AG04450 (cell line): ENCODE measurements at regions of chr2 and their contacts with region 1.

Region 1: GRCh38 chr2:70142590-70143313 is 48.1 kb downstream of the C2orf42 start:
- DNase-seq: peak; percentile 99
- H3K4me3 ChIP-seq: peak overlapping the region; percentile 59
- H3K27ac ChIP-seq: peak overlapping the region; percentile 82
- H3K27me3 ChIP-seq: no peaks in the 10 kb centered on the region
- CTCF ChIP-seq: peak; percentile 88

Region 2: DNA sequence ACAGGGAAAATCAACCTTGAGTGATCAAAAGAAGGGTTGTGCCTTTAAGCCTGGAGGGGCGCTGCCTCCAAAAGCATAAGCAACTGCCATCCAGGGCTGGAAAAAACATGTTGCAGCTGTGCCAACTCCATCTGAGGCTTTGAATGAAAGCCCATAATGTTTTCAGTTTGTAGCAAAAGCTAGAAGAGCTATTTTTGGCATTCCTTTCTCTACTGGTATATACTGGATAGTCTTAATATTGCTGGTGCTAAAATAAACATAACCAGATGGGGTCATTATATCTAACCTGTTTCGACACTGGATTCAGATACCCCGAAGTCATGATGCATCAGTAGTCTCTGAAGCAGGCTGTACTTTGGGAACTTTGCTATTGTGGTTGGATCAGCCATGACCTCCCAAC is 375.7 kb before region 1 on chr2:
- CTCF ChIA-PET with region 1: no interaction called
- POLR2A ChIA-PET with region 1: no interaction called
- DNase-seq: peak; percentile 79
- H3K4me3 ChIP-seq: no peak overlapping the region; the same call in 1 of the 2 replicates
- H3K27ac ChIP-seq: peak overlapping the region; percentile 93
- H3K27me3 ChIP-seq: no peaks in the 10 kb centered on the region
- CTCF ChIP-seq: peak; percentile 46

Region 3: DNA sequence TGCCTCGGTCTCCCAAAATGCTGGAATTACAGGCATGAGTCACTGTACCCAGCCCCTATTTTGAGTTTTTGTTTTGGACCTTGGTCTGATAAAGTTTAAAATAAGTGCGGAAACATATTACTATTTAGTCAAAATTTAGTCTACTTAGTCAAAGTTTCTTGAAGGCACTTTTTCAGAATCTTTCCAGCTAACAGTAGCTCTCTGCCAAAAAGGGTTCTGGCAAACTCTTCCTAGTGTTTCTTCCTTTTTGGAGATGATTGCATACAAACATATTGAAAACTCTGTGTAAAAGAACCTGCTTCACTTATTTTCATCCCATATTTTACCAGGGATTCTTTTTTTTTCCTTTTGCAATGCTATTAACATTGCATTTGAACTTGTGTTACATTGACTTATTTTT is 284.5 kb before region 1 on chr2:
- CTCF ChIA-PET with region 1: interaction called, 10 read pairs
- POLR2A ChIA-PET with region 1: no interaction called
- DNase-seq: no peak
- H3K4me3 ChIP-seq: no peak overlapping the region
- H3K27ac ChIP-seq: no peak overlapping the region
- H3K27me3 ChIP-seq: no peaks in the 10 kb centered on the region
- CTCF ChIP-seq: no peak

Region 4: GRCh38 chr2:70070541-70071268 is 72.0 kb before region 1 on chr2:
- CTCF ChIA-PET with region 1: interaction called, 11 read pairs
- POLR2A ChIA-PET with region 1: interaction called, 5 read pairs
- DNase-seq: peak; percentile 77
- H3K4me3 ChIP-seq: no peak overlapping the region
- H3K27ac ChIP-seq: peak overlapping the region; percentile 42
- H3K27me3 ChIP-seq: no peaks in the 10 kb centered on the region
- CTCF ChIP-seq: peak; percentile 97

Region 5: DNA sequence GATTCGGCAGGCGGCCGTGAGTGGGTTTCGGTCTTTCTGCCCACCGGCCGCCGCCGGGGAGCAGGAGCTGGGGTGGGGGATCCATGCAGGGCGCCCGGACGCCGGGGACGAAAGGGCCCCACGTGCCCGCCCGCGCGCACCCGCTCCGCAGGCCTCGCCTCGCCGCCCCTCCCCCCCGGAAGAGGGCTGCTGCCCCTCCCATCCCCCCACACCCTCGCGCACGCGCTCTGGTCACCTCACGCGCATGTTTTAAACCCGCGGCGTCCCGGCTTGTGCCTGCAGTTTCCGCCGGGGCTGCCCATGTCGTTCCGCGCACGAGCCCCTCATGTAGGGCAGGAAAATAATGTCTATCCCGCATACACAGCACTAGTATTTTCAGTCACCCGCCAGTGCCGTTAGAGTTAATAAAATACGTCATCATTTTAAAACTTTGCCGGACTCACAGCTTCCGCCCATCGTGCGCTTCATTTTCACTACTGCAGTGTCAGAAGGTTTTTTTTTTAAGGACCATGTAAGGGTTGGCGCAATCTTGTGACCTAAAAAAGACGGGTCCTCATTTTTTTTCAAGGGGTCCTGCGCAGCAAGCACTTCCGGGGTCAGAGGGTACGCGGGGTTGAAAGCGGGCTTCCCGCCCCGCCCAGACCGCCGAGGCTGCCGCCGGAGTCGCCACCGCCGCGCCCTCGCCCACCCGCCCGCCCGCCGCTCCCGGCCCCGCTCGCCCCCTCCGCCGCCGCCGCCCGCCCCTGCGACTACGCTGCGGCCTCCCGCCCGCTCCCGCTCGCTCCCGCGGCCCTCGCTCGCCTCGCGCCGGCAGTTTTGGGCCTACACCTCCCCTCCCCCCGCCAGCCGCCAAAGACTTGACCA is 55.7 kb before region 1 on chr2 and contains the start of gene PCBP1:
- CTCF ChIA-PET with region 1: interaction called, 6 read pairs
- POLR2A ChIA-PET with region 1: interaction called, 23 read pairs
- DNase-seq: peak; percentile 85
- H3K4me3 ChIP-seq: peak within 1 kb of the TSS; percentile 97
- H3K27ac ChIP-seq: peak within 1 kb of the TSS; percentile 100
- H3K27me3 ChIP-seq: no peaks in the 10 kb centered on the region
- CTCF ChIP-seq: no peak
- polyA plus RNA-seq, gene PCBP1: 63.8 and 91.3 TPM in 2 replicates

Region 6: DNA sequence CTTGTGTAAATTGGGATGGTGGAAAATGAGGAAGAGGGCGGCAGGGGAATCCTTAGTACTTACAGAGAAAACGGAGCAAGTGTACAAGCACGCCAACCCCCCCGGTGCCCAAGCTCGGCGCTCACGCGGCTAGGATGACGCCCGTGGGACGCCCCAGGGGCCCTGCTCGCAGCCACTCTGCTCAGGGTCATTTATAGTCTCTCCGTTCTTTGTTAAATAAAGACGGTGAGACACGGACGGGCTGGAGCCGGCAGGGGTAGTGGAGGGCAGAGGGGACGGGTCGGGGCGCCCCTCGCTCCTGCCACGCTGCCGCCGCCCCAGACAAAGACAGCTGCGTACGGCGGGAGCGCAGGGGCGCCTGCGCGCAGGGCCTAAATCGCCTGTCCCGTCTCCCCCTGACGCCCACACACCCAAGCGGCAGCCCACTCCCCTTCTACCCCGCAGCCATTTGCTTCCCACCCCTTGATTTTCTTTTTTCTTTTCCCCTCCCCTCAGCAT is 17.7 kb before region 1 on chr2:
- CTCF ChIA-PET with region 1: interaction called, 6 read pairs
- POLR2A ChIA-PET with region 1: interaction called, 12 read pairs
- DNase-seq: no peak
- H3K4me3 ChIP-seq: peak overlapping the region; percentile 54
- H3K27ac ChIP-seq: peak overlapping the region; percentile 91
- H3K27me3 ChIP-seq: no peaks in the 10 kb centered on the region
- CTCF ChIP-seq: no peak

Region 7: DNA sequence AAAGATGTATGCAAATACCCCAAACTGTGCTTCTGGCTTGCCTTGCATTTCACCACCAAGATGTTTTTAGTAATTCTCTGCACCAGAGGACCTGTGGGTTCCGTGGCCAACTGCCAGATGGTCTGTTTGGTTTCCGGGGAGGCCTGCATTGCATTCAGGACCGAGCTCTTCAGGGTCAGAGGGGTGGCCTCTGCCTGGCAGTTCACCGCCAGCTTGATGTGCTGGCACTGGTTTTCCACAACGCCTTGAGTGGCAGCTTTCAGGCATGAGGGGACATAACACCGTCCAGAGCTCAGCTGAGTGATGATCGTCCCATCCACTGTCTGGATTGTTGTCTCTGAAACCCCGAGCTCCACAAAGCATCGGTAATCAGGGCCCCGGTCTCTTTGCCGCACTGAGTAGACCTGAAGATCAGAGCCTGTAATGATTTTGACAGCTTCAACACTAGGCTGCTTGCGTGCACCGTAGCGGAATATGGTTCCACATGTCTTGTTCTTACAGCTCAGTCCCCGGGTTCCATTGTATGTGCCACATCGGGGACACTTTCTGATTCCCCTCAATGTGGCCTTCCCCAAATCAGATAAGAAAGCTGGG is 38.7 kb after region 1 on chr2:
- CTCF ChIA-PET with region 1: no interaction called
- POLR2A ChIA-PET with region 1: no interaction called
- DNase-seq: no peak
- H3K4me3 ChIP-seq: no peak overlapping the region
- H3K27ac ChIP-seq: no peak overlapping the region
- H3K27me3 ChIP-seq: no peaks in the 10 kb centered on the region
- CTCF ChIP-seq: no peak